ENCODE measurements at regions of chr6 and their contacts with region 1.

Region 1: DNA sequence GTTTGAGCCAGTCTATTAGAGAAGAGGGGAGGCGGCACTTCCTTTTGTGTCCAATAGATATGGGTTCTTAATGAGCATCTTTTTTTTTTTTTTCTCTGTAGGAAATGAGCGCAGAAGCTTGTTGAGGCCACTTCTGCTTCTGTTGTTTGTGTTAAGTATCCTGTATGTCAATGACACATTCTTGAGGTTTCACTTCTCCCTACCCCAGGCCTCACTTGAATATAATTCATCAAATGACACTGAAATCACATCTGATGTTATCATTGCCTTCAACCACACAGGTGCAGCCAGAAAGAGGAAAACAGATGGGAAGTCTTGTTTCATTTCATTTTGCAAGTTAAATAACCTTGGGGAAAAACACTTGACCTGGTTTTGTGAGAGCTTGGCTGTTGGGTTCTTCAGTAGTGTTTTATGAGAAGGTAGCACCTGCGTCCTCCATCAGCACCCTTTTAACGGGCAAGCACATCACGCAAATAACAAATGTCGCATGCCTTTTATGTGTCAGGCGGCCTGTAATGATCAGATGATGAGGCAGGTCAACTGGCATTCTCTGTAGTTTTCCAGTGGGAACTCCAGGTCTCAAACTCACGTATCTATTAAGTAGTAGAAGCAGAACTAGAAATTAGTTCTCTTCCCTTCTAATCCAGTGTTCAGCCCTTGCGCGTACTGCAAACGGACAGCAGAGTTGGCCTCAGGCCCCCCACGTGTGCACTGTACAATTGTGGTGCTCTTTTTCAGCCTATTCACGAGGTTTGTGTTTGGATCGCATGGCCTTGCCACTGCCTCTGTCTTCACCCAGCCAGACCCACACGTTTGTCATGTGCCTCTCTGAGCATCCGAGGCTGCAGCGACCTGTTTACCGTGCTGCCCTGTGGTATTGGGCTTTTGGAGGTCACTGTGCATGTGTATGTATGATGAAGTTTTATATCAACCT is 23.5 kb downstream of the PLEKHG1 start:
- DNase-seq: peak; percentile 40
- ATAC-seq: peak; percentile 87
- H3K4me3 Mint-ChIP-seq: peak overlapping the region; percentile 19
- H3K27ac Mint-ChIP-seq: peak overlapping the region; percentile 94
- H3K4me1 Mint-ChIP-seq: peaks cover 97% of the 10 kb centered on the region
- H3K27me3 Mint-ChIP-seq: no peaks in the 10 kb centered on the region
- CTCF ChIP-seq: no peak

Region 2: GRCh38 chr6:150417899-150418826 is 205.0 kb before region 1 on chr6:
- CTCF ChIA-PET with region 1: interaction called, 6 read pairs
- POLR2A ChIA-PET with region 1: interaction called, 19 read pairs
- intact Hi-C with region 1: no loop called
- DNase-seq: no peak
- ATAC-seq: peak; percentile 90
- H3K4me3 Mint-ChIP-seq: peak overlapping the region; percentile 82
- H3K27ac Mint-ChIP-seq: peak overlapping the region; percentile 77
- H3K4me1 Mint-ChIP-seq: peaks cover 14% of the 10 kb centered on the region
- H3K27me3 Mint-ChIP-seq: peaks cover 16% of the 10 kb centered on the region
- CTCF ChIP-seq: peak; percentile 58

Region 3: DNA sequence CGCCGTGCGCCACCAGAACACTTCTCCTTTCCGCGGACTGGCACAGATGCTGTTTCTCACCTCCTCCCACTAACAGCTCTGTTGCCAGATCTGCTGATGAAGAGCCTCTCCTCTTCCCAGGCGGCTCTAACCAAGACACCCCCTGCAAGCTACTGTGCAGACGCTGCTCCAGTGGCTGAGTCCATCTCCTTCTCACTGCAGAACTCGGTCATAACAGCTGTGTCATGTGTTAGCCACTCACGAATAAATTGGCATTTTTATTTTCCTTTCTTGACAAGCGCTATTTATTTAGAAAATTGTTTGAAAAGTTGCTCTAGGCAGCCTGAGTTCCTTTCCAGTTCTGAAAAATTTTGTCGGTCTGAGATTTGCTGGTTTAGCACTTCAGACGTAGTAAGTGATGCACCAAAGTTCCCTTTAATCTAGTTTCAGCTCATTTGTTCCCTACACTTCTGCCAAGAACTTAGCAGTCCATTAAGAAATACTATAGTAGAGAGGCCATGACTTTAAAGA is 36.3 kb before region 1 on chr6:
- CTCF ChIA-PET with region 1: no interaction called
- POLR2A ChIA-PET with region 1: no interaction called
- intact Hi-C with region 1: no loop called
- DNase-seq: no peak
- ATAC-seq: no peak
- H3K4me3 Mint-ChIP-seq: no peak overlapping the region
- H3K27ac Mint-ChIP-seq: no peak overlapping the region
- H3K4me1 Mint-ChIP-seq: peaks cover 17% of the 10 kb centered on the region
- H3K27me3 Mint-ChIP-seq: peaks cover under 1% of the 10 kb centered on the region
- CTCF ChIP-seq: no peak

Region 4: GRCh38 chr6:150606168-150606591 is 17.0 kb before region 1 on chr6:
- CTCF ChIA-PET with region 1: interaction called, 19 read pairs
- POLR2A ChIA-PET with region 1: interaction called, 177 read pairs
- intact Hi-C with region 1: no loop called
- DNase-seq: no peak
- ATAC-seq: no peak
- H3K4me3 Mint-ChIP-seq: no peak overlapping the region
- H3K27ac Mint-ChIP-seq: no peak overlapping the region
- H3K4me1 Mint-ChIP-seq: peaks cover 85% of the 10 kb centered on the region
- H3K27me3 Mint-ChIP-seq: no peaks in the 10 kb centered on the region
- CTCF ChIP-seq: no peak

Region 5: GRCh38 chr6:150692604-150693003 is 69.4 kb after region 1 on chr6:
- CTCF ChIA-PET with region 1: no interaction called
- POLR2A ChIA-PET with region 1: no interaction called
- intact Hi-C with region 1: loop called (anchors 1 kb)
- DNase-seq: no peak
- ATAC-seq: no peak
- H3K4me3 Mint-ChIP-seq: no peak overlapping the region
- H3K27ac Mint-ChIP-seq: peak overlapping the region; percentile 71
- H3K4me1 Mint-ChIP-seq: peaks cover 94% of the 10 kb centered on the region
- H3K27me3 Mint-ChIP-seq: no peaks in the 10 kb centered on the region
- CTCF ChIP-seq: no peak

Region 6: DNA sequence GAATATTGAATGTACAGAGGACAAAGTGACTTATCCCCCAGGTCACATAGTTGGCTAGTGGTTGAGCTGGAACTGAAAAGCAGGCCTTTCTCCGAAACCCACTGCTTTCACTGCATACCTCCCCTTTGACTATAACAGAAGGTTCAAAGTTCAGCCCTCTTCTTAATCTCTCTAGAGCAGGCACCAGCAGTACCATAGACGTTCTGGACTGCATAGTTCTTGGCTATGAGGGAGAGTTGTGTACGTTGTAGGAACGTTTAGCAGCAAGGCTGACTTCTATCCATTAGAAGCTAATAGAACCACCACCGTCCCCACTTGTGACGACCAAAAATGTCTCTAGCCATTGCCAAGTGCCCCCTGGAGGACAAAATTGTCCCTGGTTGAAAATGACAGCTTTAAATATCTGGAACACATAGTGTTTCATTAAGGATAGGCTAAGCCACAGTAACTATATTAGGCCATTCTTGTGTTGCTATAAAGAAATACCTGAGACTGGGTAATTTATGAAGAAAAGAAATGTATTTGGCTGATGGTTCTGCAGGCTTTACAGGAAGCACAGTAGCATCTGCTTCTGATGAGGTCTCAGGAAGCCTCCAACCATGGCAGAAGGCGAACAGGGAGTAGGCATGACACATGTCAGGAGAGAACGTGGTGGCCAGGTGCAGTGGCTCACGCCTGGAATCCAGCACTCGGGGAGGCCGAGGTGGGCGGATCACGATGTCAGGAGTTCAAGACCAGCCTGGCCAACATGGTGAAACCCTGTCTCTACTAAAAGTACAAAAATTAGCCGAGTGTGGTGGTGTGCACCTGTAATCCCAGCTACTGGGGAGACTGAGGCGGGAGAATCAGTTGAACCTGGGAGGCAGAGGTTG is 118.7 kb after region 1 on chr6:
- CTCF ChIA-PET with region 1: interaction called, 5 read pairs
- POLR2A ChIA-PET with region 1: interaction called, 3 read pairs
- intact Hi-C with region 1: loop called (anchors 5 kb)
- DNase-seq: no peak
- ATAC-seq: peak; percentile 72
- H3K4me3 Mint-ChIP-seq: no peak overlapping the region
- H3K27ac Mint-ChIP-seq: peak overlapping the region; percentile 57
- H3K4me1 Mint-ChIP-seq: peaks cover 66% of the 10 kb centered on the region
- H3K27me3 Mint-ChIP-seq: no peaks in the 10 kb centered on the region
- CTCF ChIP-seq: peak; percentile 52